MCF 10A (cell line): ENCODE measurements at regions of chr5 and their contacts with region 1.

Region 1: DNA sequence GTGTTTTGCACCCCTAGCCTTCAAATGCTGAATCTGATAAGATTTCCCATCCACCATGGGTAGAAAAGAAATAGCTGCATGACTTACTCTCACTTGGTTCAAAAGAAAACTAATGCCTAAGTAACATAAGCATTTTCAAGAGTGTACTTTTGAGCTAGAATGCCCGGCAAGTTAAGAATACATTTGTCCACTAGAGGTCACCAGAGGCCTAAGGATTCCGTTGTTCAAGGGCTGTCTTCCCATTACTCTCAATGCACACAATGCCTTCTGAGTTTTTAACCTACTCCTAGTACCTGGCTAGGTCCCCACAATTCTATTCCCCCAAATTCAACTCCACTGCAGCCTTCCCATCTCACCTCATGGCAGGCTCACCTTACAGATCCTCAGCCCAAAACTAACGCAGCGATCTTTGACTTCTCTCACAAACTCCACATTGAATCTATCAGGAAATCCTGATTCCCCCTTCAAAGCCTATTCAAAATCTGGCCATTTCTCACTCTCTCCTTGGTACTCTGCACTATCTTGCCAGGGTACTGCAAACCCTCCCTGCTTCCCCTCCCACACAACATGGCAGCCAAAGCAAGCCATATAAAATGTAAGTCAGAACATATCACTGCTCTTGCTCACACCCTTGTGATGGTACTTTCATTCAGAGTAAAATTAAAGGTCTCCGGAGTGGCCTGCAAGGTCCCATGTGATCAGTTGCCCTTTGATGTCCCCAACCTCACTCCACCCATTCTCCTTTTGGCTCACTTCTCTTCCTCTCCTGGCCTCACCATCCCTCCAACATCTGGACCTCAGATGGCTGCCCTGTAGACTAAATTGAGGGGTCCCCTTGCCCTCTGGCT is 13.4 kb downstream of the OXCT1 start:
- DNase-seq: peak; percentile 81
- H3K4me3 Mint-ChIP-seq: no peak overlapping the region
- H3K27ac Mint-ChIP-seq: no peak overlapping the region
- H3K4me1 Mint-ChIP-seq: no peaks in the 10 kb centered on the region
- H3K27me3 Mint-ChIP-seq: no peaks in the 10 kb centered on the region
- CTCF ChIP-seq: peak; percentile 73

Region 2: GRCh38 chr5:41869739-41870626 is 13.1 kb after region 1 on chr5 and contains the start of gene OXCT1:
- CTCF ChIA-PET with region 1: interaction called, 43 read pairs
- POLR2A ChIA-PET with region 1: interaction called, 7 read pairs
- intact Hi-C with region 1: no loop called
- DNase-seq: peak; percentile 87
- H3K4me3 Mint-ChIP-seq: peak within 1 kb of the TSS; percentile 89
- H3K27ac Mint-ChIP-seq: peak within 1 kb of the TSS; percentile 86
- H3K4me1 Mint-ChIP-seq: peaks cover 24% of the 10 kb centered on the region
- H3K27me3 Mint-ChIP-seq: no peaks in the 10 kb centered on the region
- CTCF ChIP-seq: no peak
- total RNA-seq, gene OXCT1: 47.1 and 48.6 TPM in 2 replicates

Region 3: GRCh38 chr5:41924872-41925554 is 68.1 kb after region 1 on chr5 and contains the start of gene FBXO4:
- CTCF ChIA-PET with region 1: interaction called, 6 read pairs
- POLR2A ChIA-PET with region 1: no interaction called
- intact Hi-C with region 1: loop called (anchors 1 kb)
- DNase-seq: peak; percentile 69
- H3K4me3 Mint-ChIP-seq: peak within 1 kb of the TSS; percentile 68
- H3K27ac Mint-ChIP-seq: peak within 1 kb of the TSS; percentile 86
- H3K4me1 Mint-ChIP-seq: no peaks in the 10 kb centered on the region
- H3K27me3 Mint-ChIP-seq: no peaks in the 10 kb centered on the region
- CTCF ChIP-seq: peak; percentile 23
- total RNA-seq, gene FBXO4: 18.4 and 20.2 TPM in 2 replicates

Region 4: DNA sequence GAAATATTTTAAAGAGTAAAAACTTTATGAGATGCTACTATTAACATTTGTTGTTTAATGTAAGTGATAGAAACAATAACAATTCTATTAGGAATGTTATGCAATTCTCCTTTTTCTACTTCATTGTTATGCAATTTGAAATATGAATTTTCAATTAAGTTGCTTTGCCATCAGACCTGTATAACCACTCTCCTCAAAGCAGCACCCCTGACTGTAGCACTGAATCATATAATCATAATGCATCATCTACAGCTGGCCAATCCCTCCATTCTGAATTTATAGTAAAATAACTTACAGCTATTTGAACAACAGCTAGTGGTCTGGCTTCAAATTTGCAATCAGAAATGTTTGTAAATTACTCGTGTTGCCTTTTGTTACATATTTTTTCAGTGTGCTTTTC is 97.4 kb after region 1 on chr5:
- CTCF ChIA-PET with region 1: no interaction called
- POLR2A ChIA-PET with region 1: no interaction called
- intact Hi-C with region 1: no loop called
- DNase-seq: no peak
- H3K4me3 Mint-ChIP-seq: no peak overlapping the region
- H3K27ac Mint-ChIP-seq: no peak overlapping the region
- H3K4me1 Mint-ChIP-seq: no peaks in the 10 kb centered on the region
- H3K27me3 Mint-ChIP-seq: no peaks in the 10 kb centered on the region
- CTCF ChIP-seq: no peak

Region 5: DNA sequence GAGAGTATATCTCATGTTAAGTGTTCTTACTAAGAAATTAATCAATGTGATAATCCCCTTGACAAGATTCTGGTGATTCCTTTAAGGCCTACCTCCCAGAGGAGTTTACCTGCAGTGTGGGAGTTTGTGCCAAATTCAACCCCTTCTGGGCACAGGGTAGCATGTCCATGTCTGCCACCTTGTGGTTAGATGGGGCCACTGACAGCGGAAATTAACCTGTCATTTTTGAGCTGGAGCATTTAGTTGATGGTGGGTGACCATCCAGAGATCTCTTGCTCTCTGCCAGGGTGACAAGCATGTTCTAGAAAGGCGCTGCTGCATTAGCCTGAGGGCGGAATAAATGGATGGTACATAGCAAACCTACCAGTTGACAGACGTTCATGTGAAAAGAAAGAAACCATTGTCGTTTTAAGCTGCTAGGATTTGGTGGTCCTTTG is 200.4 kb after region 1 on chr5:
- CTCF ChIA-PET with region 1: interaction called, 46 read pairs
- POLR2A ChIA-PET with region 1: interaction called, 4 read pairs
- intact Hi-C with region 1: loop called (anchors 1 kb)
- DNase-seq: peak; percentile 67
- H3K4me3 Mint-ChIP-seq: no peak overlapping the region
- H3K27ac Mint-ChIP-seq: no peak overlapping the region
- H3K4me1 Mint-ChIP-seq: no peaks in the 10 kb centered on the region
- H3K27me3 Mint-ChIP-seq: no peaks in the 10 kb centered on the region
- CTCF ChIP-seq: peak; percentile 76

Region 6: GRCh38 chr5:42656651-42657015 is 799.8 kb after region 1 on chr5:
- CTCF ChIA-PET with region 1: interaction called, 16 read pairs
- POLR2A ChIA-PET with region 1: interaction called, 4 read pairs
- intact Hi-C with region 1: loop called (anchors 1 kb)
- DNase-seq: peak; percentile 18
- H3K4me3 Mint-ChIP-seq: peak overlapping the region; percentile 66
- H3K27ac Mint-ChIP-seq: peak overlapping the region; percentile 25
- H3K4me1 Mint-ChIP-seq: peaks cover 15% of the 10 kb centered on the region
- H3K27me3 Mint-ChIP-seq: no peaks in the 10 kb centered on the region
- CTCF ChIP-seq: peak; percentile 16

Region 7: GRCh38 chr5:42889311-42889933 is 1032.6 kb after region 1 on chr5:
- CTCF ChIA-PET with region 1: interaction called, 26 read pairs
- POLR2A ChIA-PET with region 1: no interaction called
- intact Hi-C with region 1: loop called (anchors 2 kb)
- DNase-seq: peak; percentile 88
- H3K4me3 Mint-ChIP-seq: no peak overlapping the region
- H3K27ac Mint-ChIP-seq: no peak overlapping the region
- H3K4me1 Mint-ChIP-seq: no peaks in the 10 kb centered on the region
- H3K27me3 Mint-ChIP-seq: no peaks in the 10 kb centered on the region
- CTCF ChIP-seq: peak; percentile 85